Left cardiac atrium (tissue), 4 donors: ENCODE measurements at regions of chr16 and their contacts with region 1.

Region 1: GRCh38 chr16:57045694-57046381 is 46.5 kb upstream of the CPNE2 start:
- DNase-seq: peak; percentile 76
- ATAC-seq: peak; percentile 70 to 81

Region 2: GRCh38 chr16:56964243-56965148 is 81.3 kb before region 1 on chr16:
- intact Hi-C with region 1: loop called in 1 of 2 experiments (anchors 10 kb)
- DNase-seq: peak; percentile 94
- ATAC-seq: peak; percentile 53 to 58